ENCODE measurements at regions of chr7 and their contacts with region 1.

Region 1: DNA sequence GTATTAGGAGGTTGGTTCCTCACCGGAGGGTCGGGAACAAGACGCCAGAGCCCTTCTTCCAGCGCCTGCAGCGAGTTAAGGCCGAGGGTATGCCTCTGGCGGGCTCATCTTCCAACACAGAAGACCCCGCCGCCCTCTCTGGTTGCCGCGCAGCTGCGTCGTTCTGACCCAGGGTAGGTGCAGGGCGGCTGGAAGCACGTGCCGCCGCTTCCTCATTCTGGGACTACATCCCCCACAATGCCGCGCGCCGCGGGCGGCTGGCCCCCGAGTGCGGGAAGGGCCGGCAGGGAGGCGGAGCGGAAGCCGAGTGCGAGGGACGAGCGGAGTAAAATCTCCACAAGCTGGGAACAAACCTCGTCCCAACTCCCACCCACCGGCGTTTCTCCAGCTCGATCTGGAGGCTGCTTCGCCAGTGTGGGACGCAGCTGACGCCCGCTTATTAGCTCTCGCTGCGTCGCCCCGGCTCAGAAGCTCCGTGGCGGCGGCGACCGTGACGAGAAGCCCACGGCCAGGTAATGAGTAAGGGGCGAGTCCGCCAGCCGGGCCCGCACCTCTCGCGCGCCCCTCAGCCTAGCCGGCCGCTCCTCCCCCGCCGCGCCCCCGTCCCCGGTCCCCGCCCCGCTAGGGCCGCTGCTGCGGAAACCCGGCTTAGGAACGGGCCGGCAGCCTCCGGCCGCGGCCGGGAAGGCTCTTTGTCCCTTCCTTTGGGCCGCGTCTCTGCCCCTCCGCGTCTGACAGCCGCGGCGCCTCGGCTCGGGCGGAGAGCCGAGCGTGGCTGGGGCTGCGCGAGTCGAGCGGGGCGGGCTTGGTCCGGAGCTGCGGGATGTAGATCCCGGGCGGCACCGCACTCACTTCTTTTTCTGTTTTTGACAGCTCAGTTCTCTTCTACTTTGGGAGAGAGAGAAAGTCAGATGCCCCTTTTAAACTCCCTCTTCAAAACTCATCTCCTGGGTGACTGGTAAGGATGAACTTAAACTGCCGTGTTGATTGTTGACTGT is at the start of gene CCDC126:
- DNase-seq: peak; percentile 91
- H3K4me3 ChIP-seq: peak within 1 kb of the TSS; percentile 83
- H3K27ac ChIP-seq: peak within 1 kb of the TSS; percentile 46
- H3K4me1 ChIP-seq: peaks cover 63% of the 10 kb centered on the region
- CTCF ChIP-seq: no peak
- total RNA-seq, gene CCDC126: 9.6 and 11.9 TPM in 2 replicates

Region 2: DNA sequence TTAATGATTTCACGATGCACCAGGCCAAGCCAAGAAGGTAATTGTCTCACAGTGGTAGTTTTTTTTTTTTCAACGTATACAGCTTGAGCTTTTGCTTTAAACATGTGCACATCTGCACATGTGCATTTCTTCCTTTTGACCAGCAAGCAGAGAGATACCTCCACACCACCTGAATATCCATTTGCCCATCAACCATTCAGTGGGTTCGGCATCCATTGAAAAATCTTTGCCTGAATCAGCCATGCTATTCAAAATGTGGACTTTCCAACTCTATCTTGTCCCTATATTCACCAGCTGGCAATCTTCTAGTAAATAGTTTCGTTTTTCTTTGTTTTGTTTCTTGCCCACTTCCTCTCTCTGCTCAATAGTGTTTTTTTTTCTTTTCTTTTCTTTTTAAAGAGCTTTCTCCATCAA is 57.9 kb before region 1 on chr7:
- CTCF ChIA-PET with region 1: interaction called, 4 read pairs
- POLR2A ChIA-PET with region 1: interaction called, 10 read pairs
- intact Hi-C with region 1: no loop called
- DNase-seq: peak; percentile 61
- H3K4me3 ChIP-seq: peak overlapping the region; percentile 38
- H3K27ac ChIP-seq: peak overlapping the region; percentile 65
- H3K4me1 ChIP-seq: peaks cover 18% of the 10 kb centered on the region
- CTCF ChIP-seq: 0 out of 2 replicates have a peak, but pooled peaks have one; percentile 18